Activated B cell treated with CpG ODN at 0.5 μM for 24 hours (primary cell): ENCODE measurements at regions of chr5 and their contacts with region 1.

Region 1: DNA sequence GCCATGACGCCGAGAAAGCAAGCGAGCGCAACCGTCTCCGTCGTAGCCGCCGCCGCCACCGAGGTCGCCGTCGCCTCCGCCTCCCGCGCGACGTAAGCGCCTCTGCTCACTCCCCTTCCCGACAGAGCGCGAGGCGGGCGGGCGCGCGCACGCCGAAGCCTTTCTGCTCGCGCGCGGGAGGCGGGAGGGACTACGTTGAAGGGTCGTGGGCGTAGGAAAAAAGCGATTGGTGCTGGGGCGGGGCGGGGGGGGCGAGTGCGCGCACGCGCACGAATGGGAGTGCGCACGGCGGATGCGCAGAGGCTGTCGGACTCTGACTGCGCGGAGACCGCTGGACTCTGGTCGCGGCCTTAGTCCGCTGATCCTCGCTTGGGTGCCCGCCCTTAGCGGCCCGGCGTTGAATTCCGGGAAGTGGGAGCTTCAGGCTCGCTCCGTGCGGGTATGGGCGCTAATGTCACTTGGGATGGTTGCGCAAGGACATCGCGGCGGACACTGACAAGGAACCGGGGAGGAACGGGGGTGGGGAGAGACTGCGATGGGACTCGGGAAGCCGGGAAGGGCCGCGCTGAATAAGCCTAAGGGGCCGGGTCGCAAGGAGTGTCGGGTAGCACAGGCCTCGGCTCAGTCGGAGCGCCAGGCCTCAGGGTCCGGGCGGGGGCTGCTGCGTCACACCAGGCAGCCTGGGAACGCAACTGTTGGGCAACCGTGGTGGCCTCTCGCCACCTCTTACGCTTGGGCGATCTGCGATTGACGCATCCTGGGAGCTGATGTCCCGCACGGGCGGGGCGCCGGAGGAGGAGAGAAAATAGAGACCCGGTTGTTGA is at the start of gene CHD1:
- DNase-seq: peak; percentile 92
- ATAC-seq: peak; percentile 60
- H3K4me3 Mint-ChIP-seq: peak within 1 kb of the TSS; percentile 99
- H3K27ac Mint-ChIP-seq: peak within 1 kb of the TSS; percentile 100
- H3K4me1 Mint-ChIP-seq: peaks cover 71% of the 10 kb centered on the region
- H3K27me3 Mint-ChIP-seq: no peaks in the 10 kb centered on the region
- CTCF ChIP-seq: no peak
- total RNA-seq, gene CHD1: 65.2 and 77.5 TPM in 2 replicates

Region 2: GRCh38 chr5:98773464-98774191 is 155.5 kb before region 1 on chr5 and contains the start of gene RGMB:
- CTCF ChIA-PET with region 1: interaction called, 3 read pairs
- POLR2A ChIA-PET with region 1: interaction called, 13 read pairs
- intact Hi-C with region 1: loop called (anchors 1 kb)
- DNase-seq: peak; percentile 83
- ATAC-seq: peak; percentile 89
- H3K4me3 Mint-ChIP-seq: peak within 1 kb of the TSS; percentile 96
- H3K27ac Mint-ChIP-seq: peak within 1 kb of the TSS; percentile 96
- H3K4me1 Mint-ChIP-seq: peaks cover 55% of the 10 kb centered on the region
- H3K27me3 Mint-ChIP-seq: peaks cover 2% of the 10 kb centered on the region
- CTCF ChIP-seq: no peak
- total RNA-seq, gene RGMB: 12.7 and 13.8 TPM in 2 replicates

Region 3: GRCh38 chr5:98913911-98914310 is 15.2 kb before region 1 on chr5:
- CTCF ChIA-PET with region 1: no interaction called
- POLR2A ChIA-PET with region 1: interaction called, 12 read pairs
- intact Hi-C with region 1: loop called (anchors 1 kb)
- DNase-seq: no peak
- ATAC-seq: no peak
- H3K4me3 Mint-ChIP-seq: no peak overlapping the region
- H3K27ac Mint-ChIP-seq: peak overlapping the region; percentile 69
- H3K4me1 Mint-ChIP-seq: peaks cover 61% of the 10 kb centered on the region
- H3K27me3 Mint-ChIP-seq: no peaks in the 10 kb centered on the region
- CTCF ChIP-seq: no peak

Region 4: DNA sequence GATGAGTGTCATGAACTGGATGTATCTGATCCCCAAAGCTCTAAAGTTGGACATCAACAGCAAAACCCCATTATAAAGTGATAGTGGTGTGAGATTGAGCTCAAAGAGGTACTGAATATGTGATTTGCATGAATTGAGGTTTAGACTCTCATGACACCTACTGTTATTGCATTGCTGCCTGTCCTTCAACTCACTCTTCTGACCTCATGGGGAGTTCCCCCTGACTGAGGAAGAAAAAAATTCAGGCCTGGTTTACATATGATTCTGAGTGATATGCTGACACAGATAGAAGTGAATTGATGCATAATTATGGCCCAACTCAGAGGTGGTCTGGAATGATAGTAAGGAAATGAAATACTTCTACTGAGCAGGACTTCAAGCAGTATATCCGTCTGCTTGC is 75.9 kb after region 1 on chr5:
- CTCF ChIA-PET with region 1: no interaction called
- POLR2A ChIA-PET with region 1: interaction called, 43 read pairs
- intact Hi-C with region 1: loop called (anchors 1 kb)
- DNase-seq: no peak
- ATAC-seq: peak; percentile 98
- H3K4me3 Mint-ChIP-seq: peak overlapping the region; percentile 44
- H3K27ac Mint-ChIP-seq: peak overlapping the region; percentile 56
- H3K4me1 Mint-ChIP-seq: peaks cover 28% of the 10 kb centered on the region
- H3K27me3 Mint-ChIP-seq: no peaks in the 10 kb centered on the region
- CTCF ChIP-seq: no peak

Region 5: DNA sequence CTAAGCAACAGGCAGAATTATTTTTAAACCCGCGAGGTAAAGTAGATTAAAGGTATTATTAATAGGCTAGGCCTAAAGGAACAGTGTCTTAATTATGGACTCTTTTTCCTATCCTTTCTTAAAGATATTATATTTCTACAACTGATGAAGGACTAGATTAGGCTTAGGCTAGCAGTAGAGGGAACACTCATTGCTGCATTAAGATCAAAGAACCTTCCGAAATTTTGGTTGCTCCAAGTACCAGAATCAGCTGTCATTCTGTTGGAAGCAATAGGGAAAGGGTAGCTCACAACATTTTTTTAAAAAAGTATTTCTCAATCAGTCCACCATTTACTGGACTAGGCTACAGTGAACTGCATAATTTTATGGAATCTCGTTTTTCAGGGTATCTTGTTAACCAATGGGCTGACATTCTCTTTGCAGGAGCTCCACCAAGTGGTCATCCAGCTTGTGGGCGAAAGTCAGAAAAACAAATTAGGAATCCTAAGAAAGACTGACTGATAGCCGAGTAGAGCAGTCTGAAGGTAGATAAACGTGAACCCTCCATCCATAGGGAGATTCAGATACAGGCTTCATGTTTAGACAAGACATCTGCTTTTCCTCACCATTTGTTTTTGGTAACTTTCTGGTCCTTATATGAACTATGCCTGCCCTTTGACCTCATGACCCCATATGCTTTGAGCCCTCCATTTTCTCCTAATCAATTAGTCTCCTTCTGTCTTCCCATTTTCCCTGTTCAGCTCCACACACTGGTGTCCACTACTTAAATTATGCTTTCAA is 103.3 kb after region 1 on chr5:
- CTCF ChIA-PET with region 1: interaction called, 19 read pairs
- POLR2A ChIA-PET with region 1: interaction called, 179 read pairs
- intact Hi-C with region 1: loop called (anchors 1 kb)
- DNase-seq: no peak
- ATAC-seq: peak; percentile 32
- H3K4me3 Mint-ChIP-seq: peak overlapping the region; percentile 81
- H3K27ac Mint-ChIP-seq: peak overlapping the region; percentile 84
- H3K4me1 Mint-ChIP-seq: peaks cover 85% of the 10 kb centered on the region
- H3K27me3 Mint-ChIP-seq: no peaks in the 10 kb centered on the region
- CTCF ChIP-seq: no peak